Endothelial cell of umbilical vein (primary cell): ENCODE measurements at regions of chr9 and their contacts with region 1.

Region 1: DNA sequence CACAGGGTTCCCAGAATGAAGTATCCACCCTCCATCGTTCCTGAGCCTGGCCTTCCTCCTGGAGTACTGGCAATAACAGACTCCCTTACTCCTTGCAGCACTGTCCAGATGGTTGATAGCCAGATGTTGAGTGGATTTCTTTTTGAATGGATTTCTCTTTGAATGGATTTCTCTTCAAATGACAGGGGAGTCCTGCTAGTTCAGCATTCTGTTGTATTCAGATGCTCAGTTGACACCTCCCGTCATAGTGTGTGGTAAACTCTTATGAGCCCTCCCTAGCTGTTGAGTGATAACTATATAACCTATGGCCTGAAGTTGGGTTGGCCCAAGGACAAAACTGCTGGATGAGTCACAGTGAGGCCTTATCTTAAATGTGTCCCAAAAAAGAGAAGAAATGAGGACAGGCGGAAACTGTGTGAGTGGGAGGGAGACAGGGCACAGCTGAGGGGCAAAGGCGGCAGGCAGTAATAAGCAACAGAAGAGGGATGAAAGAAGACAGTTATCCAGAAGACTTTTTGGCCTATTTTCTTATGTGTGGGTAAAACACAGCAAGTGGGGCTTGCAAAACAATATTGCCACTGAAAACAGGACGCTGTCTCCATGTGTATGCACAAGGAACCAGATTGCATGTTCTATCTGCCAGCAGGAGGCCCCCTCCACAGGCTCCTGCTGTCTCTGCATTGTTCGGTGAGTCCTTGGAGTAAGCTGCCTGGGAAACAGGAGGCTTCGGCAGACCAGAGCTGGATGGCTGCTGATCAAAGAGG is 209.5 kb upstream of the S1PR3 start:
- DNase-seq: peak; percentile 70
- H3K4me3 ChIP-seq: no peak overlapping the region
- H3K27ac ChIP-seq: peak overlapping the region; percentile 28
- H3K4me1 ChIP-seq: peaks cover 31% of the 10 kb centered on the region
- H3K27me3 ChIP-seq: no peaks in the 10 kb centered on the region
- CTCF ChIP-seq: peak; percentile 50 to 71
- POLR2A ChIP-seq: no peak

Region 2: GRCh38 chr9:88660611-88661010 is 121.2 kb before region 1 on chr9:
- CTCF ChIA-PET with region 1: interaction called, 6 read pairs
- POLR2A ChIA-PET with region 1: no interaction called
- dilution Hi-C with region 1: no loop called
- intact Hi-C with region 1: loop called (anchors 2 kb)
- DNase-seq: peak; percentile 46
- H3K4me3 ChIP-seq: no peak overlapping the region
- H3K27ac ChIP-seq: no peak overlapping the region
- H3K4me1 ChIP-seq: no peaks in the 10 kb centered on the region
- H3K27me3 ChIP-seq: no peaks in the 10 kb centered on the region
- CTCF ChIP-seq: peak; percentile 36 to 50
- POLR2A ChIP-seq: no peak

Region 3: GRCh38 chr9:88741335-88741734 is 40.5 kb before region 1 on chr9:
- CTCF ChIA-PET with region 1: interaction called, 7 read pairs
- POLR2A ChIA-PET with region 1: no interaction called
- dilution Hi-C with region 1: no loop called
- intact Hi-C with region 1: loop called (anchors 1 kb)
- DNase-seq: no peak
- H3K4me3 ChIP-seq: no peak overlapping the region
- H3K27ac ChIP-seq: no peak overlapping the region
- H3K4me1 ChIP-seq: peaks cover 2% of the 10 kb centered on the region
- H3K27me3 ChIP-seq: no peaks in the 10 kb centered on the region
- CTCF ChIP-seq: peak; percentile 27 to 46
- POLR2A ChIP-seq: no peak

Region 4: DNA sequence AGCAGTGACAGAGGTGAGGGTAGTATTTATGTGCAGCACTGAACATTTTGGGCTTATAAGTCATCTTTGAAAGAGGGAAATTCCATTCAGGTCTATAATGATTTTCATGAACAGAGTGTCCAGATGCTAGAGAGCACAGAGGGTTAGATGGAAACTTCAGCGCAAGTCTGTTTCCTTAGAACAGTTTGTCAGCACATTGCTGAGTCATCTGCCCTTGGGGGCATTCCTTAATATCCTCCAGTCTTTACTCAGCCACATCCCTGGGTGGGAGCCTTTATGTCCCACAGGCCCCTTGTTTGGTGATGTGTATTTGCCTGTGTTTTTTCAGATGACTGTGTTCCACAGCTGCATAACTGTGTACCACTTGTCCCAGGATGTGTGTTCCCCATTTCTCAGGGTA is 71.0 kb after region 1 on chr9:
- CTCF ChIA-PET with region 1: no interaction called
- POLR2A ChIA-PET with region 1: no interaction called
- dilution Hi-C with region 1: no loop called
- intact Hi-C with region 1: loop called (anchors 2 kb)
- DNase-seq: peak; percentile 92
- H3K4me3 ChIP-seq: no peak overlapping the region
- H3K27ac ChIP-seq: peak overlapping the region; percentile 69
- H3K4me1 ChIP-seq: peaks cover 11% of the 10 kb centered on the region
- H3K27me3 ChIP-seq: no peaks in the 10 kb centered on the region
- CTCF ChIP-seq: no peak
- POLR2A ChIP-seq: peak; percentile 24

Region 5: DNA sequence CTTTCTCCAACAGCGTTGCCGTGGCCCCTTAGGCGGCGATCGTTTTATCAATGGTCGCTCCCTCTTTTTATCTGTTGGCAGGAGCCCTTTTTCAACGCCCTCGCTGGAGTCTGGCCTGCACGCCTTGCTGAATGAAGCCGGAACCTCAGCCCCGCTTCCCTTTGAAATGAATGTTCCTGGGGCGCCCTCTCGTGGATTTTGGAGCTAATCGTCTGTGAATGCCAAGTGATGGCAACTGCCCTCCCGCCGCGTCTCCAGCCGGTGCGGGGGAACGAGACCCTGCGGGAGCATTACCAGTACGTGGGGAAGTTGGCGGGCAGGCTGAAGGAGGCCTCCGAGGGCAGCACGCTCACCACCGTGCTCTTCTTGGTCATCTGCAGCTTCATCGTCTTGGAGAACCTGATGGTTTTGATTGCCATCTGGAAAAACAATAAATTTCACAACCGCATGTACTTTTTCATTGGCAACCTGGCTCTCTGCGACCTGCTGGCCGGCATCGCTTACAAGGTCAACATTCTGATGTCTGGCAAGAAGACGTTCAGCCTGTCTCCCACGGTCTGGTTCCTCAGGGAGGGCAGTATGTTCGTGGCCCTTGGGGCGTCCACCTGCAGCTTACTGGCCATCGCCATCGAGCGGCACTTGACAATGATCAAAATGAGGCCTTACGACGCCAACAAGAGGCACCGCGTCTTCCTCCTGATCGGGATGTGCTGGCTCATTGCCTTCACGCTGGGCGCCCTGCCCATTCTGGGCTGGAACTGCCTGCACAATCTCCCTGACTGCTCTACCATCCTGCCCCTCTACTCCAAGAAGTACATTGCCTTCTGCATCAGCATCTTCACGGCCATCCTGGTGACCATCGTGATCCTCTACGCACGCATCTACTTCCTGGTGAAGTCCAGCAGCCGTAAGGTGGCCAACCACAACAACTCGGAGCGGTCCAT is 219.4 kb after region 1 on chr9:
- CTCF ChIA-PET with region 1: interaction called, 32 read pairs
- POLR2A ChIA-PET with region 1: no interaction called
- dilution Hi-C with region 1: no loop called
- intact Hi-C with region 1: loop called (anchors 1 kb)
- DNase-seq: peak; percentile 77
- H3K4me3 ChIP-seq: no peak overlapping the region
- H3K27ac ChIP-seq: no peak overlapping the region
- H3K4me1 ChIP-seq: no peaks in the 10 kb centered on the region
- H3K27me3 ChIP-seq: no peaks in the 10 kb centered on the region
- CTCF ChIP-seq: peak; percentile 59 to 71
- POLR2A ChIP-seq: no peak